ENCODE measurements at regions of chr11 and their contacts with region 1.

Region 1: DNA sequence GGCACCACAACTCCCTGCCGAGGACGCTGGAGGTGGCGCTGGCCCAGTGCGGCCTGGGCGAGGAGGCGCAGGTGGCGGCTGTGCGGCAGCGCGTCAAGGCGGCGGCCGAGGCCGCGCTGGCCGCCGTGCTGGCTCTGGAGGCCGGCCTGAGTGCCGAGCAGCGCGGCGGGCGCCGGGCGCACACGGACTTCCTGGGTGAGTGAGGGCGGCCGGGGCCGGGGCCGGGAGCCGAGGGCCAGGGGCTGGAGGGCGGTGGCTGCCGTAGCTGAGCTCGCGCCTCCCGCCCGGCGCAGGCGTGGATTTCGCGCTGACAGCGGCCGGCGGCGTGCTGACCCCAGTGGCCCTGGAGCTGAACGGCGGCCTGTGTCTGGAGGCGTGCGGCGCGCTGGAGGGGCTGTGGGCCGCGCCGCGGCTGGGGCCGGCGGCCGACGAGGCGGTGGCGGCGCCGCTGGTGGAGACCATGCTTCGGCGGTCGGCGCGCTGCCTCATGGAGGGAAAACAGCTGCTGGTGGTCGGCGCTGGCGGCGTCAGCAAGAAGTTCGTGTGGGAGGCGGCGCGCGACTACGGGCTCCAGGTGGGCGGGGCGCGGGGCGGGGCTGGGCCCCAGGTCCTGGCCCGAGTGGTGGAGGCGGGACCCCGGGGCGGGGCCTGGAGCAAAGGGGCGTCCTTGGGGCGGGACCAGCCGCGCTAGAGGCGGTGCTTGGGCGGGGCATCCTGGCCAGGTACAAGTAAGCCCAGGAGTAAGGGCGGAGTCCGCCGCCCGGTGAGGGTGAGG is 5.4 kb downstream of the CARNS1 start:
- H3K4me3 Mint-ChIP-seq: peak overlapping the region; percentile 76
- H3K27ac Mint-ChIP-seq: peak overlapping the region; percentile 51
- H3K4me1 Mint-ChIP-seq: peaks cover 62% of the 10 kb centered on the region
- H3K27me3 Mint-ChIP-seq: peaks cover 51% of the 10 kb centered on the region

Region 2: DNA sequence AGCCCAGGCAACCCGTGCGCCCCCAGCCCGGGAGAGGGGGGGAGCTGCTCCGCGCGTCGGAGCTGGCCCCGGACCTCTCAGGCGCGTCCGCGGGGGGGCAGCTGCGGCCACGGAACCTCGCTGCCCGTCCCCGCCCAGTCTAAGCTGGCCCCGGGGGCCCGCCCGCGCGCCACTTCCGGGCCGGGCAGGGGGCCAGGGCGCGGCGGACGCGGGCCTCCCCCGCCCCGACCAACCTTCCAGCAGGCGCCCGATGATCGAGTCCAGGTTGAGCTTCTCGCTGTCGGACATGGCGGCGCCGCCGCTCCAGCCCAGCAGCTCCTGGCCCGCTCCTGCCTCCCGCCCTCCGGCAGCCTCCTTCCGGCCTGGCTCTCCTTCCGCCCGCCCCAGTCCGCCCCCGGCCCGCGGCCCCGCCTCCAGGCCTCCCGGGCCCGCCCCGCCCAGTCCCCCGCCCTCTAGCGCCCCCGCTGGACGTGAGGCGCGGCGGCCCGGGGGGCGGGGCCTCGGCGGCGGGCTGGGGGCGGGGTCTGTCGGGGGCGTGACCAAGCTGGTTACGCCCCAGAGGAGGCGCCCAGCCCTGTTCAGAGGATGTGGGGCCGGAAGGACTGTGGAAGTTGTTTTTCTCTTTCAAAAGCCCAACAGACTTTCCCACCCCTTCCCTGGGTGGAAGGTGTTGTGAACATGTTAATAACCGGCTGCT is 19.2 kb before region 1 on chr11 and contains the start of gene PPP1CA:
- intact Hi-C with region 1: loop called (anchors 2 kb)
- H3K4me3 Mint-ChIP-seq: peak within 1 kb of the TSS; percentile 80
- H3K27ac Mint-ChIP-seq: peak within 1 kb of the TSS; percentile 82
- H3K4me1 Mint-ChIP-seq: peaks cover 87% of the 10 kb centered on the region
- H3K27me3 Mint-ChIP-seq: no peaks in the 10 kb centered on the region

Measured in dendritic cell treated with granulocyte-macrophage colony-stimulating factor and Interleukin-4, amounts not matched to agents 40 ng/mL and 50 ng/mL, for 4 days (primary cell).